ENCODE measurements at regions of chr14 and their contacts with region 1.

Region 1: GRCh38 chr14:30982533-30982932 is 42.9 kb upstream of the AP4S1 start:
- DNase-seq: no peak
- H3K4me3 ChIP-seq: no peak overlapping the region
- H3K4me3 Mint-ChIP-seq: no peak overlapping the region
- H3K27ac ChIP-seq: no peak overlapping the region
- H3K27ac Mint-ChIP-seq: peak overlapping the region in 1 of 7 donors; percentile 11
- H3K4me1 ChIP-seq: no peaks in the 10 kb centered on the region
- H3K4me1 Mint-ChIP-seq: peaks cover 15 to 28% (median 19%) of the 10 kb centered on the region in 4 donors
- H3K27me3 ChIP-seq: no peaks in the 10 kb centered on the region
- H3K27me3 Mint-ChIP-seq: no peaks in the 10 kb centered on the region

Region 2: DNA sequence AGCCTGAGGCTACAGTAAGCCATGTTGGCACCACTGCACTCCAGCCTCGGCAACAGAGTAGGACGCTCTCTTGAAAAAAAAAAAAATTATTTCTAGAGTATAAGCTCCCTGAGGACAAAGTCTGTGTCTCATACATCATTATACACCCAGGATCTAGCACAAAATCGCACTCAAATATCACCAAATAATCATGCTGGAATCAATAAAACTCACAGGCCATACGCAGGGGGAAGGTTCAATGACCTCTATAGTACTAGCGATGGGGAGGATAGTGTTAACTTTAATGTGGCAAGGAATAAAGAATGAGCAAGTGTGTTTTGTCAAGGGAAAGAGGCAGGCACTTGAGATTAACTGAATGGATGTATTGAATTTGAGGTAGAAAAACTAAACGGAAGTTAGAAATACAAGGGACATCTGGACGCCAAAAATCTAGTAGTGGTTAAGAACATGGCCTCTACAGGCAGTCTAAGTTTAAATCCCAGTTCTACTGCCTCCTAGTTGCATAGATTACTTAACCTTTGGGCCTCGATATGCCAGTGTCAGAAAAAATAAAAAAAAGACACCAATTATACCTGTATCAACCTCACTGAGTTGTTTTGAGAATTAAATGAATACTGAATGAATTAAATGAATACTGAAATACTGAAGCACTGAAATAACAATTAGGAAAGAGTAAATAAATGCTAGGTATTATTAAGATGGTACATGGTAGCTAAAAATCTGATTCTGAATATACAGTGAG is 38.5 kb after region 1 on chr14:
- CTCF ChIA-PET with region 1: interaction called, 5 read pairs
- POLR2A ChIA-PET with region 1: interaction called, 3 read pairs
- intact Hi-C with region 1: loop called (anchors 2 kb)
- DNase-seq: no peak
- H3K4me3 ChIP-seq: no peak overlapping the region
- H3K4me3 Mint-ChIP-seq: peak overlapping the region in 1 of 8 donors; percentile 1
- H3K27ac ChIP-seq: no peak overlapping the region
- H3K27ac Mint-ChIP-seq: peak overlapping the region in 2 of 7 donors; percentile 43 to 82
- H3K4me1 ChIP-seq: peaks cover 23% of the 10 kb centered on the region
- H3K4me1 Mint-ChIP-seq: peaks cover 29 to 55% (median 40%) of the 10 kb centered on the region in 4 donors
- H3K27me3 ChIP-seq: no peaks in the 10 kb centered on the region
- H3K27me3 Mint-ChIP-seq: no peaks in the 10 kb centered on the region

Region 3: GRCh38 chr14:31084385-31084784 is 101.9 kb after region 1 on chr14:
- CTCF ChIA-PET with region 1: interaction called, 61 read pairs
- POLR2A ChIA-PET with region 1: no interaction called
- intact Hi-C with region 1: loop called (anchors 1 kb)
- DNase-seq: no peak
- H3K4me3 ChIP-seq: no peak overlapping the region
- H3K4me3 Mint-ChIP-seq: no peak overlapping the region
- H3K27ac ChIP-seq: no peak overlapping the region
- H3K27ac Mint-ChIP-seq: no peak overlapping the region
- H3K4me1 ChIP-seq: no peaks in the 10 kb centered on the region
- H3K4me1 Mint-ChIP-seq: no peaks in the 10 kb centered on the region
- H3K27me3 ChIP-seq: no peaks in the 10 kb centered on the region
- H3K27me3 Mint-ChIP-seq: no peaks in the 10 kb centered on the region

Region 4: DNA sequence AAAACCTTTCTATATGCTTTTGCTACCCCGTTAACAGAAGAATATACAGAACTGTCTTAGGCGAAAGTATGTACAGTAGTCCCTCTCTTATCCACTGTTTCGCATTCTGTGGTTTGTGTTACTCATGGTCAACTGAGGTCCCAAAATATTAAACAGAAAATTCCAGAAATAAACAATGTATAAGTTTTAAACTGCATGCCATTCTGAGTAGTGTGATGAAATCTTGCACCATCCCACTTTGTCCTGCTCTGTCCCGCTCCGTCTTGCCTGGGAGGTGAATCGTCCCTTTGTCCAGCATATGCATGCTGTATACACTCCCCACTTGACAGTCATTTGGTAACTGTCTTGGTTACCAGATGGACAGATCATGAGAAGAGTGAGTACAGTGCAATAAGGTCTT is 113.7 kb after region 1 on chr14:
- CTCF ChIA-PET with region 1: interaction called, 11 read pairs
- POLR2A ChIA-PET with region 1: no interaction called
- intact Hi-C with region 1: no loop called
- DNase-seq: no peak
- H3K4me3 ChIP-seq: no peak overlapping the region
- H3K4me3 Mint-ChIP-seq: no peak overlapping the region
- H3K27ac ChIP-seq: no peak overlapping the region
- H3K27ac Mint-ChIP-seq: peak overlapping the region in 2 of 7 donors; percentile 16 to 27
- H3K4me1 ChIP-seq: no peaks in the 10 kb centered on the region
- H3K4me1 Mint-ChIP-seq: peaks cover 0 to 1% (median 0%) of the 10 kb centered on the region in 4 donors
- H3K27me3 ChIP-seq: no peaks in the 10 kb centered on the region
- H3K27me3 Mint-ChIP-seq: no peaks in the 10 kb centered on the region

Region 5: DNA sequence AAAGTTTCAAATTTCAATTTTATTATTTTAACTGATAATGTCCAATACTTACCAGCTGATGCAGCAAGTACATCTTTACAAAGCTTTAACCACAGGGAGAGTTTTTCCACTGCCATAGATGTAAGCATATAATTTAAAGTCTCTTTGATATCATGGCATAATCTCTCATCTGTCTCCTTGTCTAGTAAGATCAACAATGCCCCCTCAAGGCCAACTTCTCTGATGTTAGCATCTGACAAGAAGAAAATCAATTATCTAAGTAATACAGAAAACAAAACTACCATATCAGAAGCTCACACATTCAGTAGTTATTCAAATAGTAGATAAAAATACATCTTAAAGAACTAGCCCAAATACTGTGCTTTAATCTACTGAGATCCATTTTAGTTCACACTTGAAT is 343.6 kb after region 1 on chr14:
- CTCF ChIA-PET with region 1: interaction called, 9 read pairs
- POLR2A ChIA-PET with region 1: no interaction called
- intact Hi-C with region 1: loop called (anchors 1 kb)
- DNase-seq: peak; percentile 7 to 37 (median 20)
- H3K4me3 ChIP-seq: no peak overlapping the region
- H3K4me3 Mint-ChIP-seq: no peak overlapping the region
- H3K27ac ChIP-seq: no peak overlapping the region
- H3K27ac Mint-ChIP-seq: no peak overlapping the region
- H3K4me1 ChIP-seq: no peaks in the 10 kb centered on the region
- H3K4me1 Mint-ChIP-seq: peaks cover 0 to 2% (median under 1%) of the 10 kb centered on the region in 4 donors
- H3K27me3 ChIP-seq: no peaks in the 10 kb centered on the region
- H3K27me3 Mint-ChIP-seq: no peaks in the 10 kb centered on the region

Region 6: DNA sequence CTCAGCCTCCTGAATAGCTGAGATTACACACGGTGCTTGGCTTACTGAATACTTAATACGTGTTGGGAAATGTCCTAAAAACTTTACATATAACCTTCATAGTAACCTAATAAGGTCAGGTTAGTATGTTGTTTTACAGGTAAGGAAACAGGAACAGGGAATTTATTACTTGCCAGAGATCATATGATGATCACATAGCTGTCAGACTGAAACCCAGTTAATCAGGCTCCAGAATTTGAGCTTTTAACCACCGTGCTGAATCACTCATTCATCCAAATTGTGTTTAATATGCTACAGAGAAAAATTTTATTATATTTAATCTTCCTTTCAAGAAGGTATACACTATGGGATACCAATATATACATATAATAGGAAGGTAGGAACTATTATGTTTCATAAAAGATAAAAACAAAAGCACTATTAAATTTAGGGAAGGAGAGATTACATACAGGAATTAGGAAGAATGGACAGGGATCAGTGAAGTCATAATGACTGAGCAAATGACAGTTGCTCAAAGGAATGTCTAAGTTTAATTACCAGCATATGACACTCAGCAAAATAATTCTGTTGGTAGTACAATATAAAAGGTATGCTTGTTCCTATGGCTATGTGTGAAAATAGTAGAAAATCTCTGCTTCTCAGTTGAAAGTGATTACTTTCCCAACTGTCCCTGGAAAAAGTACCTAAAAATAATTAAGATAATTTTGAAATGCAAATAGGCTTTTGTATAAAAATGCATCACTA is 378.6 kb after region 1 on chr14:
- CTCF ChIA-PET with region 1: interaction called, 6 read pairs
- POLR2A ChIA-PET with region 1: no interaction called
- intact Hi-C with region 1: loop called (anchors 1 kb)
- DNase-seq: no peak
- H3K4me3 ChIP-seq: no peak overlapping the region
- H3K4me3 Mint-ChIP-seq: no peak overlapping the region
- H3K27ac ChIP-seq: no peak overlapping the region
- H3K27ac Mint-ChIP-seq: peak overlapping the region in 1 of 7 donors; percentile 58
- H3K4me1 ChIP-seq: peaks cover 2% of the 10 kb centered on the region
- H3K4me1 Mint-ChIP-seq: no peaks in the 10 kb centered on the region
- H3K27me3 ChIP-seq: no peaks in the 10 kb centered on the region
- H3K27me3 Mint-ChIP-seq: no peaks in the 10 kb centered on the region